ENCODE measurements at regions of chr5 and their contacts with region 1.

Region 1: DNA sequence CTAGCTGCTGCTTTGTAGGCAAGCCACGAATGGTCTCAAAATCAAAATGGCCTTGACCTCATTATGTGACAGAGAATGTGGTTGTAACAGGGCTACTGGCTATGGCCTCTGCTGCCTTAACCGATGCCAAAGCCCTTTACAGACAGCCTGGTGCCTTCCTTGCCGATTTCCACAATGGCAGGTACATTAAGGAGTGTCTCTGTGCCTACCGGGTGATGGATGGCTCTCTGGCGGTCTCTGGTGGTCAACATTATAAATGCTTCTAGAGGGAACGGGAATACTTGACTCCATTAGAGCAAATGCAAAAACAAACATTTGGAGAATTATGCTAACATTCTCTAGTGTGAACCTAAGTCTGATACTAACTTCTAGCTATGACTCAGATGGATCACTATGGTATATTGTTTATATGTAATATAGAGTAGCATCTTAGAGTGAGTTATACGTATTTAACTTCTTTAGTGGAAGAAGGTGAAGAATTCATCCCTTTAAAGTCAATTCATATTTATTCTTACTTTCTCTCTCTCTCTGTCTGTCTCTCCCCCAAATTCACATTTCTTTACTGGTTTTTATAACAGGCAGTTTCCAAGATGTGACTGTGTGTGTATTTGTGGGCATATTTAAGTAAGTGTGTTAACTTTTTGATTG is 52.5 kb downstream of the RPS23 start:
- DNase-seq: peak; percentile 81
- H3K4me3 Mint-ChIP-seq: no peak overlapping the region
- H3K27ac Mint-ChIP-seq: no peak overlapping the region
- H3K4me1 Mint-ChIP-seq: no peaks in the 10 kb centered on the region
- H3K27me3 Mint-ChIP-seq: no peaks in the 10 kb centered on the region
- CTCF ChIP-seq: peak; percentile 85

Region 2: DNA sequence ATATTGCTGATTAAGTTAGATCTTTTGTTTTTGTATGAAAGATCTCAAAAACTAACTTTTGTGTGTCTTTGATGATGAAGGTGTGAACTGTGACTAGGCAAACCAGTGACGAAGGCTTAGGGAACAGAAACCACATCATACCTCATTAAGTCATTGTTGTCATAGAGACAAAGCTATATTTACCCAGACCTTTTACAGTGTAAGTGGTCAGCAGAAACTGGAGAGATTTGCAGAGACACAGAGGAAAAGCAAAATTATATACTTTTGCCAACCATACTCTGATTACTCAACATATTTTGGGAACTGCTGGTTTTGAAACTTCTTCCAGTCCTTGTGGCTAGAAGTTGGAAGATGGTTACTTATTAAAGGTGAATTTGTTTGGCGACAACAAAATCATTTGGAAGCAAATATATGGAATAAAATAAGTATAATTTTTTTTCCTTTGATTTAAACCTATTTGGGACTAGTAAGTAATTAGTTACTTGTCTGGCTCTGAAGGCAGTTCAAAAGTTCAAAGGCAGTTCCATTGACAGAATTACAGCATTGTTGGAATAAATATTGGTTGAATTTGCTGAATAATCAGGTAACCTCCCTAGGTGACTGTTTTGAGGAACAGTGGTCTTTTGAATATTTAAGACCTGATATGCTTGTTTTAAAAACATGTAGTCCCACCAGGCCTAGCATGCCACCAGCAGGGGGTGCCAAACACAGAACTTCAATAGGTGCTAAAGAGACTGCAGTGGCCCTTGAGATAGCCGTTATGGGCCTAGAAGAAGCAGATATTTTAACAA is 51.3 kb before region 1 on chr5:
- CTCF ChIA-PET with region 1: no interaction called
- intact Hi-C with region 1: loop called (anchors 1 kb)
- DNase-seq: peak; percentile 86
- H3K4me3 Mint-ChIP-seq: no peak overlapping the region
- H3K27ac Mint-ChIP-seq: no peak overlapping the region
- H3K4me1 Mint-ChIP-seq: no peaks in the 10 kb centered on the region
- H3K27me3 Mint-ChIP-seq: no peaks in the 10 kb centered on the region
- CTCF ChIP-seq: peak; percentile 87

Measured in Calu3 (cell line).